ENCODE measurements at regions of chr5 and their contacts with region 1.

Region 1: GRCh38 chr5:134370871-134371833 is at the start of gene UBE2B:
- DNase-seq: peak; percentile 95
- H3K4me3 Mint-ChIP-seq: peak within 1 kb of the TSS; percentile 99
- H3K27ac Mint-ChIP-seq: peak within 1 kb of the TSS; percentile 97
- H3K4me1 Mint-ChIP-seq: peaks cover 66% of the 10 kb centered on the region
- H3K27me3 Mint-ChIP-seq: peaks cover 2% of the 10 kb centered on the region
- total RNA-seq, gene UBE2B: 98.9 and 108 TPM in 2 replicates

Region 2: GRCh38 chr5:134304311-134304710 is 66.8 kb before region 1 on chr5:
- intact Hi-C with region 1: loop called (anchors 5 kb)
- DNase-seq: no peak
- H3K4me3 Mint-ChIP-seq: no peak overlapping the region
- H3K27ac Mint-ChIP-seq: no peak overlapping the region
- H3K4me1 Mint-ChIP-seq: no peaks in the 10 kb centered on the region
- H3K27me3 Mint-ChIP-seq: peaks cover 2% of the 10 kb centered on the region

Region 3: GRCh38 chr5:134577796-134578363 is 206.7 kb after region 1 on chr5:
- intact Hi-C with region 1: loop called (anchors 2 kb)
- DNase-seq: peak; percentile 62
- H3K4me3 Mint-ChIP-seq: no peak overlapping the region
- H3K27ac Mint-ChIP-seq: peak overlapping the region; percentile 6
- H3K4me1 Mint-ChIP-seq: no peaks in the 10 kb centered on the region
- H3K27me3 Mint-ChIP-seq: no peaks in the 10 kb centered on the region

Region 4: DNA sequence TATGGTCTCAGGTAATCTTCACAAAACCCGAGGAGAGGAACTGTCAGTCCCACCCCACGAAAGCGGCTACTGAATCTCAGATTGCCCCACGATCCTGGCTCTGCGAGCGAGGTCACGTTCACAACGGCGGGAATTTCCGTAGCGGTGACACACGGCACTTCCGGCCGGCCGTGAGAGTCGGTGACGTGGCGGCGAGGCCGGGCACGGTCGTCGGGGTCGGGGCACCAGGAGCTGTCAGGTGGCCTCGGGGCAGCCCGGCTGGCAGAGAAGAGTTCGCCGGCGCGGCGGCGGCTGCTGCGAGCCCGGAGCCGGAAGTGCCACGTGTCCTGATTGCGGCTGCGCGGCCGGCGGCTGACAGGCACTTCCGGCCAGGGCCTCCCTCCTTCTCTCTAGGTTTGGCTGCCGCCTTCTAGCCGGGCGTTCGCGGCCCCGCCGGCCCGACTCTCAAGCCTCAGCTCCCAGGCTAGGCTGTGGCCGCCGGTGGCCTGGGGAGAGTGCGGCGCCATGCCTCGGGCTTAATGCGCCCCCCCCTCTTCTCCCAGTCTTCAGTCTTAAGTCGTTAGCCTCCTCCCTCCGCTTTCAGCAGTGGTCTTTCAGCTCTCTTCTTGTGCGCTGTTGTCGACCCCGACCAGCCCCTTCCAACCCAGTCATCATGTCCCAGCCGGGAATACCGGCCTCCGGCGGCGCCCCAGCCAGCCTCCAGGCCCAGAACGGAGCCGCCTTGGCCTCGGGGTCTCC is 277.4 kb after region 1 on chr5 and contains the start of gene SEC24A:
- intact Hi-C with region 1: loop called (anchors 1 kb)
- DNase-seq: peak; percentile 89
- H3K4me3 Mint-ChIP-seq: peak within 1 kb of the TSS; percentile 87
- H3K27ac Mint-ChIP-seq: peak within 1 kb of the TSS; percentile 94
- H3K4me1 Mint-ChIP-seq: peaks cover 32% of the 10 kb centered on the region
- H3K27me3 Mint-ChIP-seq: no peaks in the 10 kb centered on the region
- total RNA-seq, gene SEC24A: 26.5 and 27.2 TPM in 2 replicates

Region 5: GRCh38 chr5:134845852-134846640 is 474.9 kb after region 1 on chr5 and contains the start of gene C5orf24:
- intact Hi-C with region 1: loop called (anchors 2 kb)
- DNase-seq: peak; percentile 90
- H3K4me3 Mint-ChIP-seq: peak within 1 kb of the TSS; percentile 97
- H3K27ac Mint-ChIP-seq: peak within 1 kb of the TSS; percentile 97
- H3K4me1 Mint-ChIP-seq: peaks cover 25% of the 10 kb centered on the region
- H3K27me3 Mint-ChIP-seq: no peaks in the 10 kb centered on the region
- total RNA-seq, gene C5orf24: 42.2 and 43.2 TPM in 2 replicates

Measured in activated T-helper 1 cell treated with anti-CD3 and anti-CD28 coated beads, Interleukin-12 subunit alpha, Interleukin-12 subunit beta, Interleukin-2, Interleukin-4 antibody, amounts not matched to agents 30 ng/mL and 10 ng/mL and 1 ng/mL, durations not matched to agents 14 hours and 24 hours and 36 hours (primary cell).